Activated naive CD4-positive, alpha-beta T cell treated with anti-CD3 and anti-CD28 coated beads for 36 hours (primary cell): ENCODE measurements at regions of chr2 and their contacts with region 1.

Region 1: DNA sequence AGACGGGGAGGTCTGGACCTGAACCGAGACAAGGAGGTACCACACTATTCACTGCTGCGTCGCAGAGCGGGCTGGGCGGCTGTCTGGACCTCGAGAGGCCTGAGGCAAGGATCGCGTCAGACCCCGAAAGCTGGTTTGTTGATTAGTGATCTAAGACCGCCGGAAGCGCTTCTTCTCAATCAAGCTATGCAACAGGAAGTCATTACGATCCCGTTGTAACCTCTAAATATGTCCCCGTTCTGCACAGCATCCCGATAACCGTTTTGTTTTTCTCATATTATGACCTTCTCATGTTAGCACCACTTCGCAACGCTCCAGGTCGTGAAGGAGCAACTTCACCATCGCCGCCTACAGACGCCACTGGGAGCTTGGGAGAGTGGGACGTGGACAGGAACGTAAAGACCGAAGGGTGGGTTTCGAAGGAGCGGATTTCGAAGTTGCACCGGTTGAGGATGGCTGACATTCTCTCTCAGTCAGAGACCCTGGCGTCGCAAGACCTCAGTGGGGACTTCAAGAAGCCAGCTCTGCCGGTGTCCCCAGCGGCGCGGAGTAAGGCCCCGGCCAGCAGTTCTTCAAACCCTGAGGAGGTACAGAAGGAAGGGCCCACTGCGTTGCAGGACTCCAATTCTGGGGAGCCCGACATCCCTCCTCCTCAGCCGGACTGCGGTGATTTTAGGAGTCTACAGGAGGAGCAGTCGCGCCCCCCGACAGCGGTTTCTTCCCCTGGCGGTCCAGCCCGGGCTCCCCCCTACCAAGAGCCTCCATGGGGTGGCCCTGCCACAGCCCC is at the starts of genes SLC4A1AP and SUPT7L:
- DNase-seq: peak; percentile 76
- H3K4me3 Mint-ChIP-seq: peak within 1 kb of the TSS; percentile 98
- H3K27ac Mint-ChIP-seq: peak within 1 kb of the TSS; percentile 99
- H3K4me1 Mint-ChIP-seq: peaks cover 47% of the 10 kb centered on the region
- H3K27me3 Mint-ChIP-seq: no peaks in the 10 kb centered on the region
- total RNA-seq, gene SLC4A1AP: 21.2 to 22.2 TPM
- total RNA-seq, gene SUPT7L: 27.8 to 29.7 TPM

Region 2: DNA sequence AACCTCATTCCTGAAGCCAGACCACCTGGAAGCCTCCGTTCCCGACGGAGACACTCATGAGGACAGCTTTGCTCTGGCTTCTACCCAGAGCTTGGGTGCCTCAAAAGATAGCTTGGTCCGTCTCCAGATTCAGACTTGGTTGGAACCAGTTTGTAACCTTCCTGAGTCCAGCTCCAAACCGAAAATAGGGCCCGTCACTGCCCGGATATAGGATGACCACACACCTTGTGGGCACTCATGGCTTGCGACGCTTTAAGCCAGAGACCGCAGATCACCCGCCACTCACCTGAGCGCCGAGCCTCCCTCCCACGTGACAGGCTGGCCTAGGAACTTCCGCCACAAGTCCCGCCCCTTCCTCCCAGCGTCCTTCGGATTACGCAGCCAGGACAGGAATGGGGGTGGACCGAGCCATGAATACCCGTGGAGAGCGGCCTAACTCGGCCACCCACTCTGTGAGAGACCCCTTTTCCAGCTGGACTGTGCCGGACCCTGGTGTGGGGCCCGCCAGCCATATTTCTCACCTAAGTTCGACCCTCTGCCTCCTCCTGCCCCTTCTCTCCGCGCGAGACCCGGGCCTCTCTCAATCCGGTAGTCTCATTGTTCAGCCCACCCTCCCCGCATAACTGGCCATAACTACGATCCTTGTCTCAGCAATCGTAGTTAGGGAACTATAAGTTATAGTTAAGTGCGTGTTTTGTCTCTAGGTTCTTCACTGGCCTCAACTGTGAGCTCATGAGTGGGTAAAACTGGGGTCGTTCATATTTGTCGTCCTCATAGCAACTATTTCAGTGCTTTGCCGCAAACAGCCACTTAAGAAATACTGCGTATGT is 340.7 kb before region 1 on chr2 and contains the start of gene MPV17:
- CTCF ChIA-PET with region 1: no interaction called
- intact Hi-C with region 1: loop called (anchors 1 kb)
- DNase-seq: peak; percentile 95
- H3K4me3 Mint-ChIP-seq: peak within 1 kb of the TSS; percentile 84
- H3K27ac Mint-ChIP-seq: peak within 1 kb of the TSS; percentile 85
- H3K4me1 Mint-ChIP-seq: peaks cover 14% of the 10 kb centered on the region
- H3K27me3 Mint-ChIP-seq: no peaks in the 10 kb centered on the region
- total RNA-seq, gene MPV17: 80.2 to 82.3 TPM

Region 3: DNA sequence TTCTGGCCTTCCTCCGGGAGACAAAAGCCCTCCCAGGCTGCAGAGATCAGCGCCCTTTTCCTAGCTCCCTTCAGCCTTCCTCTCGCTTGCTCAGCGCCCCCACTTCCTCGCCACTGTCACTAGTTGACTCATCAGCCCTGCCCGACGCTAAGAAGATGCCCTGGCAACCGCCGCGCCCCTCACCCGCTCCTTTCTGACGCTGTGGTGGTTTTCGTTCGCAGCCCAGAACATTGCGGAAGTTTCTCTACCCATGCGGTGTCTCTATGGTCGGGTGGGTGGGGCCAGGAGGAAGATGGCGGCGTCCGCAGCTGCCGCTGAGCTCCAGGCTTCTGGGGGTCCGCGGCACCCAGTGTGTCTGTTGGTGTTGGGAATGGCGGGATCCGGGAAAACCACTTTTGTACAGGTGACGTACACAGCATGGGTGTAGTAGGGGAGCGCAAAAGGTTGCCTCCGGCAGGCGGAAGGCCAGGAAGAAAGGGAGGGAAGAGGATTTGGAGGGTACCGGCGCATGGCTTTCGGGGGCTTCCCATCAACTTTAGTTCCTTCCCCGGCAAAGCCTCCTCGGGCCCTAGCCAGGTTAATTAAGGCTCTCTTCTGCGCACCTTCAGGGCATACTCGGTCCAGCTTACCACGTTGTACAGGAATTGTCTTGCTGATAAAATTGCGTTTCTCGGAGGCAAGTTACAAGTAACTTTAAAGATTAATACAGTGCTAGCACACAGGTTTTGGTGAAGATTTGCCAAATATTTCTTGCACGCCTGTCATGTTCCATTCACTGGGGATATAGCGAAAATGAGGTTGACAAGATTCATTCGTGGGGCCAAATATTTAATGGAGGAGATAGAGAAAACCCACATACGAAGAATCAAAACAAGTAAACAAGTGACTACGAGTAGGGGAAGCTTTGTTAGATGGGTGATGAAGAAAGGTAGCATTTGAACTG is 34.6 kb before region 1 on chr2 and contains the starts of genes CCDC121 and GPN1:
- CTCF ChIA-PET with region 1: interaction called, 3 read pairs
- intact Hi-C with region 1: loop called (anchors 1 kb)
- DNase-seq: peak; percentile 98
- H3K4me3 Mint-ChIP-seq: no peak within 1 kb of the TSS
- H3K27ac Mint-ChIP-seq: peak within 1 kb of the TSS; percentile 52
- H3K4me1 Mint-ChIP-seq: peaks cover 13% of the 10 kb centered on the region
- H3K27me3 Mint-ChIP-seq: no peaks in the 10 kb centered on the region
- total RNA-seq, gene CCDC121: 0.17 to 0.30 TPM
- total RNA-seq, gene GPN1: 44.9 to 45.1 TPM

Region 4: DNA sequence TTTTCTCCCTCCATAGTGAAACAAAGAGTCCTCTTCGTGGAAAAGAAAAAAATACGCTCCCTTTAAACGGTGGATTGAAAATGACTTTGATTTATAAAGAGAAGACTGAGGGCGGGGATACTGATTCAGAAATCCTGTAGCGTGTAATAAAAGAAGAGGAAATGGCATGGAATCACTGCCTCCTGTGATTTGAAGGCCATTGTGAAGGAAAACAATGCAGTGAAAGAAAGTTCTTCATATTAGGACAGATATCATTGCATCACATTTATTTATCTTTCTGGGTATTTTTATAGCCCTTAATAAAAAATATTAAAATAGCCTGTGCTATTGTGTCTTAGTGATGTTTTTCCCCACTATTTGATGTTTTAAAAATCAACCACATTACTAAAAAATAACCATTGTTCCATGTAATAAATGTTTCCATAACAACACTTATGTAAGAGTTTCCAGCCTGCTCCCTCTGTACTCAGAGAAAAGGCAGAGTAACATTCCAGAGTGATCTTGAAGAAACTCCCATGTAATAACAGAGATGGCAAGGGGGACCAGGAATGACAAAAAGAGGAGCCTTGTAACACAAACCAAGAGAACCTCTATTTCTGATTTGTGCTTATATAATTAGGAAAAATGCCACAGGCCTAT is 115.9 kb after region 1 on chr2:
- CTCF ChIA-PET with region 1: no interaction called
- intact Hi-C with region 1: no loop called
- DNase-seq: no peak
- H3K4me3 Mint-ChIP-seq: no peak overlapping the region
- H3K27ac Mint-ChIP-seq: peak overlapping the region; percentile 62
- H3K4me1 Mint-ChIP-seq: peaks cover 27% of the 10 kb centered on the region
- H3K27me3 Mint-ChIP-seq: no peaks in the 10 kb centered on the region